ENCODE measurements at regions of chr11 and their contacts with region 1.

Region 1: DNA sequence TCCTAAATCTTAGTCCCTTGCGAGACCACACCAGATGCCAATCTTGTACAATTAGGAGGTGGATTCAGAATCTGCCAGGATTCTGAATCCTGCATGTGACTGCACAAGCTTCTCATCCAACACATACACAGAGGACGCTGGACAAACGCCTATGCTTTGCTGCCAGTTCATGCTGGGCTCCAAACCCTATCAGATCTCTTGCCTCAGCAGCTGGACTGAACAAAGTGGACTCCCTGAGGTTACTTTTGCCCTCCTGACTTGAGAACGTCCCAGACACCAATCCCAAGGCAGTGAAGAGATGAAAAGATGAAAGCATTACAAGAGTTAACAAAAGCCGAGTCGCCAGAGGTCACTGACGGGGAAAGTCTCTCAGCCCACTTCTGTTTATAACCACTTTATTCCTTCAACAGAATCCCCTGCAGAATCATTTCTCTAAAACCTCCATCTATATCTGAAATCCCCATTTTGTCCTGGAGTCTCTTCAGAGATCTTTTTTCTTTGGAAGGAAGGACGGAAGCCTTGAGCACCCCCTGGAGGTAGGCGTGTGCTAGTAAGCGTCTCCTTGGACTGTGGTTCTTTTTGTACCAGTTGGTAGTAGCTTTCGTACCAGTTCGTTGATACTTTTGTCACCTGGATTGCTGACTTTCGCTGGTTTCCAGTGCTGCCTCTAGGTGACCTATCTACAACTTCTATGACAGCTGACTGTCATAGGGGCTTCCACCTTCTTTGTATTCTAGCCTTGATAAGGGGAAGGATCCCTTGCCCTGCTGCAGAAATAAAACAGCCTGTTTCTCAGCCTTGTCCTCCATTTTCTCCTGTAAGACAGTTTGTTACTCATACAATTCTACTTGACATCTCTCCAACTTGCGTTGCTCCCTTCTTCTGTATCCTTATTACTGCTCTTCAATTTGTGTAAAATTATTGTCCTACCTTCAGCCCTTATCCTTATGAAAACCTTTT is 26.1 kb upstream of the EED start:
- DNase-seq: peak; percentile 80
- H3K4me3 Mint-ChIP-seq: peak overlapping the region; percentile 14
- H3K27ac Mint-ChIP-seq: peak overlapping the region; percentile 90
- H3K4me1 Mint-ChIP-seq: peaks cover 82% of the 10 kb centered on the region
- H3K27me3 Mint-ChIP-seq: peaks cover 3% of the 10 kb centered on the region

Region 2: DNA sequence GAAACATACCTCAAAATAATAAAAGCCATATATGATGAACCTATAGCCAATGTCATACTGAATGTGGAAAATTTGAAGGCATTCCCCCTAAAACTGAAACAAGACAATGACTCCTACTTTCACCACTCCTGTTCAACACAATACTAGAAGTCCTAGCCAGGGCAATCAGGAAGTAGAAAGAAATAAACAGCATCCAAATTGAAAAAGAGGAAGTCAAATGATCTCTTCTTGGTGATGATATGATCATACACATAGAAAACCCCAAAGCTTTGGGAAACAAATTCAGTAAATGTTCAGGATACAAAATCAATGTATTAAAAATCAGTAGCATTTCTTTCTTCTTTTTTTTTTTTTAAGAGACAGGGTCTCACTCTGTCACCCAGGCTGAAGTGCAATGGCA is 701.1 kb before region 1 on chr11:
- CTCF ChIA-PET with region 1: no interaction called
- intact Hi-C with region 1: no loop called
- DNase-seq: no peak
- H3K4me3 Mint-ChIP-seq: no peak overlapping the region
- H3K27ac Mint-ChIP-seq: no peak overlapping the region
- H3K4me1 Mint-ChIP-seq: no peaks in the 10 kb centered on the region
- H3K27me3 Mint-ChIP-seq: no peaks in the 10 kb centered on the region

Region 3: GRCh38 chr11:85699957-85700741 is 518.3 kb before region 1 on chr11:
- CTCF ChIA-PET with region 1: no interaction called
- intact Hi-C with region 1: loop called (anchors 5 kb)
- DNase-seq: no peak
- H3K4me3 Mint-ChIP-seq: no peak overlapping the region
- H3K27ac Mint-ChIP-seq: peak overlapping the region; percentile 36
- H3K4me1 Mint-ChIP-seq: peaks cover 35% of the 10 kb centered on the region
- H3K27me3 Mint-ChIP-seq: no peaks in the 10 kb centered on the region

Region 4: DNA sequence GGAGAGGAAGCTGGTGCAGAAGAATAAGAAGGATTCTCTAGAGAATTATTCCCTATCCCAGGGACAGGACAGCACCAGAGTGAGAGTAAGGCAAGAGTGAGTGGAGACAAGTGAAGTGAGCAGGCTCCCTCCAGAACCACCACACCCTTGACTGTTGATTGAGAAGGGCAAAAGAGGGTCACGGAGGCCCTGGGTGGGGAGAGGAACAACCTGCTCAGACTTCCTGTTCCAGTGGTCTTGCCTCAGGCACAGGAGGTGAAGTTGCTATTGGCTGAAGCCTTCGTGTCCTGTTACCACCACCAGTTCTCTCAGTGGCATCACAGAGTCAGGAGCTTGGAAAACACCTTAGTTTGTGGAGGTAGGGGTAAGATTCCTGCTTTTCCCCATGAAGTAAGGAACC is 480.7 kb before region 1 on chr11:
- CTCF ChIA-PET with region 1: no interaction called
- intact Hi-C with region 1: no loop called
- DNase-seq: no peak
- H3K4me3 Mint-ChIP-seq: no peak overlapping the region
- H3K27ac Mint-ChIP-seq: no peak overlapping the region
- H3K4me1 Mint-ChIP-seq: peaks cover 31% of the 10 kb centered on the region
- H3K27me3 Mint-ChIP-seq: no peaks in the 10 kb centered on the region

Region 5: GRCh38 chr11:86041975-86042378 is 176.4 kb before region 1 on chr11:
- CTCF ChIA-PET with region 1: interaction called, 32 read pairs
- intact Hi-C with region 1: loop called (anchors 1 kb)
- DNase-seq: peak; percentile 77
- H3K4me3 Mint-ChIP-seq: no peak overlapping the region
- H3K27ac Mint-ChIP-seq: peak overlapping the region; percentile 73
- H3K4me1 Mint-ChIP-seq: peaks cover 69% of the 10 kb centered on the region
- H3K27me3 Mint-ChIP-seq: no peaks in the 10 kb centered on the region

Region 6: GRCh38 chr11:86174101-86175046 is 44.0 kb before region 1 on chr11:
- CTCF ChIA-PET with region 1: no interaction called
- intact Hi-C with region 1: loop called (anchors 2 kb)
- DNase-seq: no peak
- H3K4me3 Mint-ChIP-seq: no peak overlapping the region
- H3K27ac Mint-ChIP-seq: no peak overlapping the region
- H3K4me1 Mint-ChIP-seq: peaks cover 20% of the 10 kb centered on the region
- H3K27me3 Mint-ChIP-seq: no peaks in the 10 kb centered on the region

Region 7: DNA sequence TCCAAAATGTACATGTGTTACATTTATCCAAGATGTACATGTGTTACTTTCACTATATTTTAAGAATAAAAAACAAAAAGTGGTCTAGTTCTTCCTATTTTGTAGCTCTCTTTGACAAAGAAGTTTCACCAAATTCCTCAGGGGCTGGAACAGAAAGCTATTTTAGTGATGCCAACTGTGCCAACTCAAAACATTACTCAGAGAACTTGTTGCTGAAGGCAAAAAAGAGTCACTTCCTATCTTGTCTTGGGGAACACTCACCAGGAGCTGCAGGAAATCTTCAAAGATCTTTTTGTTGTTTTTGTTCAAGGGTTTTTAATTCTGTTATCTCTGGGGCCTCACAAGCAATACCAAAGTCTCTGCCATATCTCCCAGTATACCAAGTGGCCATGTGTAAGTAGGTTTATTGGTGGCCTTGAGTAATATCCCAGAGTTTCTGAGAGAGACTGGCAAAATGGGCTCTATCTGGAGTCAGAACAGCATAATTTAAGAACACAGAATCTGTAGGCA is 12.6 kb after region 1 on chr11:
- CTCF ChIA-PET with region 1: interaction called, 13 read pairs
- intact Hi-C with region 1: loop called (anchors 1 kb)
- DNase-seq: no peak
- H3K4me3 Mint-ChIP-seq: no peak overlapping the region
- H3K27ac Mint-ChIP-seq: peak overlapping the region; percentile 15
- H3K4me1 Mint-ChIP-seq: peaks cover 62% of the 10 kb centered on the region
- H3K27me3 Mint-ChIP-seq: no peaks in the 10 kb centered on the region

Region 8: GRCh38 chr11:86355256-86355655 is 136.9 kb after region 1 on chr11:
- CTCF ChIA-PET with region 1: no interaction called
- intact Hi-C with region 1: no loop called
- DNase-seq: no peak
- H3K4me3 Mint-ChIP-seq: no peak overlapping the region
- H3K27ac Mint-ChIP-seq: no peak overlapping the region
- H3K4me1 Mint-ChIP-seq: no peaks in the 10 kb centered on the region
- H3K27me3 Mint-ChIP-seq: no peaks in the 10 kb centered on the region

Region 9: GRCh38 chr11:86418917-86419316 is 200.5 kb after region 1 on chr11:
- CTCF ChIA-PET with region 1: no interaction called
- intact Hi-C with region 1: loop called (anchors 5 kb)
- DNase-seq: peak; percentile 18
- H3K4me3 Mint-ChIP-seq: no peak overlapping the region
- H3K27ac Mint-ChIP-seq: no peak overlapping the region
- H3K4me1 Mint-ChIP-seq: peaks cover 3% of the 10 kb centered on the region
- H3K27me3 Mint-ChIP-seq: no peaks in the 10 kb centered on the region

Region 10: DNA sequence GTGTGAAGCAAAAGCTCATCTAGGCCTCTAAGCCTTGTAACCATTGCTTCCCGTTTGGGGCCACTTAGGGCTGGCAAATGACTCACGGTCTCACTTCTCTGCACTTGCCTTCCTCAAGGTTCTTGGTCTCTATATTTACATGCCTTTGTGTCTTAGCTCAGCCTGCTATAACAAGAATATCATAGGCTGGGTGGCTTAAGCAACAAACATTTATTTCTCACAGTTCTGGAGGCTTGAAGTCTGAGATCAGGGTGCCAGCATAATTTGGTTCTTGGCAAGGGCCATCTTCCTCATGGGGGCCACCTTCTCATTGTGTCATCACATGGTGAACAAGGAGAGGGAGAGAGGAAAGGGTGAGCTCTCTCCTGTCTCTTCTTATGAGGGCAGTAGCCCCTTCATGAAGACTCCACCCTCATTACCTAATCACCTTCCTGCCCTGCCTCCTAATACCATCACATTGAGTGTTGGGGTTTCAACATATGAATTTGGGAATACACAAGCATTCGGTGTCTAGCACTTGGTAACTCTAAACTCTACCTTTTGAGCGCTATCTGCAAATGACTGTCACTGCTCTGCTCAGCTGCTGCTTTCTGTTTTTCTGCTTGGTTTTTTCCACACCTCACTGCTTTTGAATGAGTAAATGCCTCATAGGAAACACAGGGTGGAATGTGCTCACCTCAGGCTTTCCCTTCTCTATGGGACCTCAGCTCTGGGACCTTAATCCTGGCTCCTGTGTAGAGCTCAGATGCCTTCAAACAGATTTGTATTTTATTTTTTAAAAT is 470.2 kb after region 1 on chr11:
- CTCF ChIA-PET with region 1: no interaction called
- intact Hi-C with region 1: loop called (anchors 10 kb)
- DNase-seq: peak; percentile 70
- H3K4me3 Mint-ChIP-seq: no peak overlapping the region
- H3K27ac Mint-ChIP-seq: peak overlapping the region; percentile 90
- H3K4me1 Mint-ChIP-seq: peaks cover 27% of the 10 kb centered on the region
- H3K27me3 Mint-ChIP-seq: peaks cover 2% of the 10 kb centered on the region